ENCODE measurements at regions of chr11 and their contacts with region 1.

Region 1: DNA sequence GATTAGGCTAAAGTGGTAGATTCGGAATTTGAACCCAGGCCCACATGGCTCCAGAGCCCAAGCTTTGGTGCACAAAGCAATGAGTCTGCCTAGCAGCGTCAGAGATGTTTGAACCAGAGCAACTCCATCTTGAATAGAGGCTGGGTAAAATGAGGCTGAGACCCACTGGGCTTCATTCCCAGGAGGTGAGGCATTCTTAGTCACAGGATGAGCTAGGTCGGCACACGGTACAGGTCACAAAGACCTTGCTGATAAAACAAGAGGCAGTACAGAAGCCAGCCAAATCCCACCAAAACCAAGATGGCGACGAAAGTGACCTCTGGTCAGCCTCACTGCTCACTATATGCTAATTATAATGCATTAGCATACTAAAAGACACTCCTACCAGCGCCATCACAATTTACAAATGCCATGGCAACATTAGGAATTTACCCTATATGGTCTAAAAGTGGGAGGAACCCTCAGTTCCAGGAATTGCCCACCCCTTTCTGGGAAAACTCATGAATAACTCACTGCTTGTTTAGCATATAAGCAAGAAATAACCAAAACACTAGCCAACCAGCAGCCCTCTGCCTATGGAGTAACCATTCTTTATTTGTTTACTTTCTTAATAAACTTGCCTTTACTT is 40.3 kb upstream of the DAGLA start:
- DNase-seq: no peak
- ATAC-seq: no peak
- H3K4me3 ChIP-seq: no peak overlapping the region
- H3K4me3 Mint-ChIP-seq: no peak overlapping the region
- H3K27ac ChIP-seq: no peak overlapping the region
- H3K27ac Mint-ChIP-seq: no peak overlapping the region
- H3K4me1 ChIP-seq: peaks cover 4% of the 10 kb centered on the region
- H3K4me1 Mint-ChIP-seq: no peaks in the 10 kb centered on the region
- H3K27me3 ChIP-seq: no peaks in the 10 kb centered on the region
- H3K27me3 Mint-ChIP-seq: no peaks in the 10 kb centered on the region
- CTCF ChIP-seq: no peak

Region 2: DNA sequence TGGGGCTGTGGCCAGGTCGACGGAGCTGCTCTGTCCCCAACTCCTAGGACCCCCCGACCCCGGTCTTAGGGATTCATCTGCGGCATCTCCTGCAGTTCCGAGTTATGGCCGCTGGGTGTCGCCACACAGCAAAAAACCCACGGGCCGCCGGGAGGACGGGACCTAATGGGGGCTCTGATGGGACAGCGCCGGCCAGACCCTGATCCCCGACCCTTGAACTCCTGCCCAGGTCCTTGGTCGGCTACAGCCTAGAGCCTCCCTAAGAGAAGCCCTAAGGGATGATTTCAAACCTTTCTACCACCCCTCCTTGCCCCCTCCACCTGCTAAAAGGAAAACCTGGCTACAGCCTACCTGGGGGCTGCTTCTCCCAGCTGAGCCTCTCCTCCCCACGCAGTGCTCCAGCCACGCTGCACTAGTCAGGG is 162.2 kb before region 1 on chr11:
- CTCF ChIA-PET with region 1: interaction called, 3 read pairs
- POLR2A ChIA-PET with region 1: no interaction called
- intact Hi-C with region 1: loop called (anchors 1 kb)
- DNase-seq: peak; percentile 29 to 71 (median 43)
- ATAC-seq: peak; percentile 39
- H3K4me3 ChIP-seq: no peak overlapping the region
- H3K4me3 Mint-ChIP-seq: no peak overlapping the region
- H3K27ac ChIP-seq: no peak overlapping the region
- H3K27ac Mint-ChIP-seq: no peak overlapping the region
- H3K4me1 ChIP-seq: peaks cover 9% of the 10 kb centered on the region
- H3K4me1 Mint-ChIP-seq: peaks cover 7% of the 10 kb centered on the region
- H3K27me3 ChIP-seq: peaks cover 0 to under 1% of the 10 kb centered on the region in 2 experiments
- H3K27me3 Mint-ChIP-seq: no peaks in the 10 kb centered on the region
- CTCF ChIP-seq: peak; percentile 96

Region 3: DNA sequence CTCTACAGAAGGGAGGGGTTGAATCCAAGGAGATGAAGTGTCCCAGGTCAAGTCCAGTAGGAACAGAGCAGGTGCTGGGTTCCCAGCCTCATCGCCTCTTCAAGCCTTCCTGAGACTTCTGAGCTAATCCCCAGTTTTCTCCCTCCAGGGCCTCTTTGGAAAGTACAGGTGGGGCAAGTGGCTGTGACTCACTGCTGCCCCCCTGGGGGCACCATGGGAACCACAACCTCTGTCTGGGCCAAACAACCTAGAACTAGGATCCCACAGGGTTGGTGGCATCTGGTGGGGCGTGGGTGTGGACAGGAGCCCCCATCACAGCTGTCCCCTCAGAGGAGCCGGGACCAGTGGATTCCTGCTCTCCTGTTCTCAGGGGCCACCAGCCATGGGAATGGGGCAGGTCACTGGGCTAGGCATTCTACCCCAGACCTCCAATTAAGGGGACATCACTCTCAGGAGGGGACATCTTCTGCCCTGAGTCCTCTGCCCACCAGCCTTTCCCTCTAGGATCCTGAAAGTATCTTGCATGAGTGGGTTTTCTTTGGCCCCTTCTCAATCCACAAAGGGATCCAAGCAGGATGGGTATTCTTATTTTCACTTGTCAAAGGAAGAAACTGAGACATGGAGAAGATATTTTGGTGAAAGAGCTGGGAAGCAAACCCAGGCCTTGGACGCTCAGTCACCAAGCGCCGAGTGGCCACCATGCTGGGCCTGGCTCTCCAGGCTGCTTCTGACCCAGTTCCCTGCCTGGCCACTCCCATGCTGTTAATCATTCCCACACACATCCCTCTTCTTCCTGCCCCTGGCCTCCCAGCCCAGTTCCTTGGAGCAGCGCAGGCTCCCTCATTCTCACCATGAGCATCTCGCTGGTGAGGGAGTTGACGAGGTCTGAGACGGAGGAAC is 107.5 kb before region 1 on chr11:
- CTCF ChIA-PET with region 1: interaction called, 4 read pairs
- POLR2A ChIA-PET with region 1: no interaction called
- intact Hi-C with region 1: loop called in 1 of 2 experiments (anchors 5 kb)
- DNase-seq: peak in 13 of 14 experiments; percentile 10 to 66 (median 28)
- ATAC-seq: peak; percentile 67
- H3K4me3 ChIP-seq: no peak overlapping the region
- H3K4me3 Mint-ChIP-seq: no peak overlapping the region
- H3K27ac ChIP-seq: no peak overlapping the region
- H3K27ac Mint-ChIP-seq: no peak overlapping the region
- H3K4me1 ChIP-seq: no peaks in the 10 kb centered on the region
- H3K4me1 Mint-ChIP-seq: no peaks in the 10 kb centered on the region
- H3K27me3 ChIP-seq: peaks cover 0 to 4% of the 10 kb centered on the region in 2 experiments
- H3K27me3 Mint-ChIP-seq: peaks cover 30% of the 10 kb centered on the region
- CTCF ChIP-seq: peak; percentile 80